ENCODE measurements at regions of chr4 and their contacts with region 1.

Region 1: DNA sequence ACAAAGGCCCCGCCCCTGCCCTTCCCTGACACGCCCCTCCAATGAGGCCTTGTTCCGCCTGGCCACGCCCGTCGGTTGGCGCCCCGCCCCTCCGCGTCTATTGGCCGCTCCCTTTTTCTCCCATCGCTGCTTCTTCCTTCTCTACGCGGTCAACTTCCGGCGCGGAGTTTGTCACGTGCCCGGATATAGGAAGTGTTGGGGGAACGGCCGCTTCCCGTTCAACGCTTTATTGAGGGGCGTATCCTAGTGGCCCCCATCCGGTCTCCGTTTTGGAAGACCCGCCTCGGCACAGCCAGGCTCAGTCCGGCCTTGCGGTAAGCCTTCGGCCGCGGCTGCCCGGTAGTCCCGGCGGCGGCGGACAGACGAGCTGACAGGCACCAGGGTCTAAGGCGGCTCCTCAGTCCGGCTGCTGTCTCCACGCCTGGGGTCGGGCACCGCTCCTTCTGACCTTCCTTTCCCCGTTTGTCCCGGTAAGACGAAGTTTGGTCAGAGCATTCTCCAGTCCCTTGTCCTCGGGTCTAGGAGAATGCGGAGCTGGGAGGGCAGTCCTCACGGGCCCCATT is at the start of gene EXOC1:
- DNase-seq: peak; percentile 87
- H3K4me3 ChIP-seq: peak within 1 kb of the TSS; percentile 88
- H3K27ac ChIP-seq: peak within 1 kb of the TSS; percentile 77
- H3K27me3 ChIP-seq: no peaks in the 10 kb centered on the region
- CTCF ChIP-seq: no peak
- polyA plus RNA-seq, gene EXOC1: 26.8 and 35.2 TPM in 2 replicates

Region 2: DNA sequence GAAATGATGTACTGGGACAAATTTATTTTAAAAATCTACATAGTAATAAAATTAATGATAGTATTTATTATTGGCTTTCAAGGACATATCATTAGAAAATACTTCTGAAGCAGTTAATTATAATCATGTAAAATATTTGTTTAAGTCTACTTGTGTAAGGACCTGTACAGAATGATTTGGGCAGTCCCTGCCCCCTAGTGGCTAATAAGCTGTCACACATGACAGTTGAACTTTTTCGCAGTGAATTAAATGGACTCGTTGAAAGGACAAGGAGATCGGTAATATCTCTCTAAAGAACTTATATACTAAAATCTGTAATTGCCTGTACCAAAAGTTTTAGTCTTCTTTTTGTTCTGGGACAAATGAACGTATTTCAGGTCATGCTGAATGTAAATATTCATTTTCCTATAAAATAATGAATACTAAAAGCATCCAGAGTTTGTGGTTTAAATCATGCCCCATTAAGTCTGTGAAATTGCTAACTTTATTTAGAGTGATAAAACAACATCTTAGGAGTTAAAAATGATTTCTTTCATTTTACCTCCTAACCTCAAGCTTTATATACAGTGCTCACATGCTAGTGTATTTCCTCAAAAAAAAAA is 13.5 kb after region 1 on chr4:
- CTCF ChIA-PET with region 1: interaction called, 17 read pairs
- POLR2A ChIA-PET with region 1: interaction called, 5 read pairs
- DNase-seq: no peak
- H3K4me3 ChIP-seq: no peak overlapping the region
- H3K27ac ChIP-seq: no peak overlapping the region
- H3K27me3 ChIP-seq: no peaks in the 10 kb centered on the region
- CTCF ChIP-seq: peak; percentile 85

Region 3: DNA sequence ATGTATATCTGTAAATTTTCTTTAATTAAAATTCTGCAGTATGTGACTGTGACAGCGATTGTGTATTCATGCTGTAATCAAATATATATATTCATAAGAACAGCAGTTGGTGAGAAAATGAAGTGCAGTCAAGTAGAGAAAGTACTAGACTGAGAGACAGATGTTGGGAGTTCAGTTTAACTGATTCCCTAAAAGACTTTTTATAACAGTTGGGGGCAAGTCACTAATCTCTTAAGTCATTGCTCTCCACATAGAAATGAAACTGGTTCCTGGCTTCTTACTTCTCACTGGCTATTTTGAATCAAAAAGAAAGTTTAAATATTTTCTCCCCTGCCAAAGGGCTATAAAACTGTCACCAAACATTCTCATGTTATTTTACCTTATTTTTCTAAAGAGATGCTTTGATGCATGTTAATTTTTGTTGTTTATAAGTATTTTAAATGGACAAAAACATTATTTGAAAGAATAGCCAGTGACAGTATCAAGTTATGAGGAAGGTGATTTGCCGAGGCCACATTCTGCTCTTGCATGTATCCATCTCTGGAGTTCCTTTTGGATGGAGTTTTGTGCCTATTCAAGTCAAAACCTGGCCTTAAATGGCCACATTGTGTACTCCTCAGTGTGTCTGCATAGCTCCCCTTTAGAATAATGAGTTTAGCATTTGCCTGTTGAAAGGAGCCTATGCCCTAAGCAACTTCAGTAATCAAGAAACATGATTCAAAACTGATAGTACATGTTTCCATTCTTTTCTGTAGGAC is 30.7 kb after region 1 on chr4:
- CTCF ChIA-PET with region 1: no interaction called
- POLR2A ChIA-PET with region 1: no interaction called
- DNase-seq: no peak
- H3K4me3 ChIP-seq: no peak overlapping the region
- H3K27ac ChIP-seq: no peak overlapping the region
- H3K27me3 ChIP-seq: no peaks in the 10 kb centered on the region
- CTCF ChIP-seq: no peak

Region 4: GRCh38 chr4:56007154-56007553 is 153.6 kb after region 1 on chr4:
- CTCF ChIA-PET with region 1: no interaction called
- POLR2A ChIA-PET with region 1: no interaction called
- DNase-seq: no peak
- H3K4me3 ChIP-seq: no peak overlapping the region
- H3K27ac ChIP-seq: no peak overlapping the region
- H3K27me3 ChIP-seq: no peaks in the 10 kb centered on the region
- CTCF ChIP-seq: no peak

Region 5: DNA sequence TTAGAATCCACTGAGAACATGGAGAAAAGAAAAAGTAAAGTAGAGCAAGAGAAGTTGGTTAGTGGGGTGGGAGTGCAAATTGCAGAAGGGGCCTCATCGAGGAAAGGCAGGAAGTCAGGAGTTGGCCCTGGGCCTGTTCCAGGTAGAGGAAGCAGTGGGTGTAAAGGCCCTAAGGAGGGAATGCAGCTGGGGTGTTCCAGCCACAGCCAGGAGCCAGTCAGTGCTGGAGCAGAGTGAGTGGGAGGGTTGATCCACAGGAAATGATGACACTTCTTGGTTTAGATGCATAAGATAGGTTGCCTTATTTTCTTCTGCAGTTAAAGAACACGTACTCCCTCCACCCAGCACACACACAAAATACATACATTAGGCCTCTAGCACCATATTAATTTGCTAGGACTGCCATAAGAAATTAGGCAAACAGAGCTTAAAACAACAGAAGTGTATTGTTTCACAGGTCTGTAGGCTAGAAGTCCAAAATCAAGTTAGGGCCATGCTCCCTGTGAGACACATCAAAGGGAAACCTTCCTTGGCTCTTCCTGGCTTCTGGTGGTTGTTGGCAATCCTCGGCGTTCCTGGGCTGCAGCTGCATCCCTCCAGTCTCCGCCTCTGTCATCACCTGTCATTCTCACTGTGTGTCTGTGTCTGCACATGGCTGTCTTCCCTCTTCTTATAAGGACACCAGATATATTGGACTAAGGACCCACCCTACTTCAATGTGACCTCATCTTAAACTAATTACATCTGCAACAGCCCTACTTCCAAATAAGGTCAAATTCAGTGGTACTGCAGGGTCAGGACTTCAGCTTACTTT is 327.8 kb after region 1 on chr4:
- CTCF ChIA-PET with region 1: no interaction called
- POLR2A ChIA-PET with region 1: no interaction called
- DNase-seq: no peak
- H3K4me3 ChIP-seq: no peak overlapping the region
- H3K27ac ChIP-seq: no peak overlapping the region
- H3K27me3 ChIP-seq: no peaks in the 10 kb centered on the region
- CTCF ChIP-seq: no peak

Measured in AG04450 (cell line).